ENCODE measurements at regions of chr14 and their contacts with region 1.

Region 1: GRCh38 chr14:68466491-68467032 is 326.3 kb downstream of the ZFP36L1 start:
- DNase-seq: peak; percentile 78
- ATAC-seq: peak; percentile 55
- H3K4me3 ChIP-seq: peak overlapping the region; percentile 1 to 41
- H3K27ac ChIP-seq: peak overlapping the region; percentile 92
- H3K4me1 ChIP-seq: peaks cover 73 to 84% of the 10 kb centered on the region in 2 experiments
- H3K27me3 ChIP-seq: no peaks in the 10 kb centered on the region
- CTCF ChIP-seq: no peak
- POLR2A ChIP-seq: no peak
- RAD21 ChIP-seq: no peak

Region 2: DNA sequence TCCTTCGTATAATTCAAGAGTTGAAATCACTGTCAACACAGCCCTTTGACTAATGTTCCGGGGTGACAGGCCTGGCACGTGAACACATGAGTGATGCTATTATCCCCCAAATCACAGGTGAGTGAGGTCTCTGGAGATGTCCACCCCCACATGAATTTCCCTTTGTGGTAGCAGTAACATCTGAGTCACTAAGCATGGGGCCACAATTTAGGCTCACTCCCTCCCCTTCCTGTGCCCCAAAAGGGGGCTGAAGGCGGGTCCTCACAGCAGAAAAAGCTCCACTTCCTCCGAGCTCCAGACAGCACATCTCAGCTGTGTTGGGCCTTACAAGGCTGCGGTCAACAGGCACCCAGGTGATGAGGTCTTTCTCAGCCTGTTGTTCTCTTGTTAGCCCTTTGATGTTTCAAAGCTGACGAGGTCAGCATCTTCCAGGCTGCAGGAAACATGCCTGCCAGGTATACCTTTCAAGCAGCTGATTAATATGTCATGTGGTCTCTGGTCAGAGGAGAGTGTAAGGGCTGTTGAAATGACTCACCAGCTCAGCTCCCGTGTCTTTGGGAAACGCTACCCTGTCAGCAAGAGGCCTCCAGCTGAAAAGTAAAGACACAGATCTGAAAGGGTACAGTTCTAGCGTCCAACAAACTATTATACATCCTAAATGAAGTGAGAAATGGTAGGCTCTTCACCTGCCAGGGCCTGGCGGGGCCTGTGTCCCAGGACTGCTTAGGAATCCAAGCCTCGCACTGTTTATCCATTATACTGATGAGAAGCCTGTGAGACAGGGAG is 219.1 kb after region 1 on chr14:
- CTCF ChIA-PET with region 1: no interaction called
- POLR2A ChIA-PET with region 1: no interaction called
- RAD21 ChIA-PET with region 1: no interaction called
- intact Hi-C with region 1: loop called (anchors 10 kb)
- DNase-seq: peak; percentile 86
- ATAC-seq: peak; percentile 79
- H3K4me3 ChIP-seq: peak overlapping the region in 1 of 2 experiments; percentile 2; a peak in 1 of 4 replicates
- H3K27ac ChIP-seq: peak overlapping the region; percentile 66
- H3K4me1 ChIP-seq: peaks cover 55 to 85% of the 10 kb centered on the region in 2 experiments
- H3K27me3 ChIP-seq: no peaks in the 10 kb centered on the region
- CTCF ChIP-seq: no peak
- POLR2A ChIP-seq: no peak
- RAD21 ChIP-seq: peak; percentile 13; the same call in 1 of the 2 replicates

Measured in HCT116 (cell line).